ENCODE measurements at regions of chr3 and their contacts with region 1.

Region 1: DNA sequence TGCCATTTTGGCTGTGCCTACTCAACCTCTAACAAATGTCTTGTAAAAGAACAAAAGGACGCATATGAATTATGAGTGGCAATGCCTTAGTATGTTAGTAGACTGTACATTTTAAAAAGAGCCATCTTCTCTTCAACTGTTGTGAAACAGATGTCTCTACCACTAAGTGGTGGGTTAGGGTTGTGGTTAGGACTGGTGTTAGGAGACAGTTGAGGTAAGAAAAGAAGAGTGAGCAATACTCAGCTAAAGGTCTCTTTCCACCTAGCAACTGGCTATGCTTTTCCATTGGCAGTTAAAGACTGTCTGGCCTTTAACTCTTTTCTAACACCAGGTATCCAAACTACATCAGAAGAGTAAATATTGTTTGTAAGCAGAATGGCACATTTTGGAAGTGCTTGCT is 221.7 kb upstream of the TBC1D5 start:
- DNase-seq: no peak
- H3K4me3 Mint-ChIP-seq: no peak overlapping the region
- H3K27ac Mint-ChIP-seq: peak overlapping the region; percentile 54
- H3K4me1 Mint-ChIP-seq: peaks cover 11% of the 10 kb centered on the region
- H3K27me3 Mint-ChIP-seq: peaks cover 2% of the 10 kb centered on the region

Region 2: GRCh38 chr3:17945018-17945798 is 18.9 kb before region 1 on chr3:
- intact Hi-C with region 1: loop called (anchors 2 kb)
- DNase-seq: no peak
- H3K4me3 Mint-ChIP-seq: no peak overlapping the region
- H3K27ac Mint-ChIP-seq: no peak overlapping the region
- H3K4me1 Mint-ChIP-seq: peaks cover 12% of the 10 kb centered on the region
- H3K27me3 Mint-ChIP-seq: peaks cover 11% of the 10 kb centered on the region

Region 3: DNA sequence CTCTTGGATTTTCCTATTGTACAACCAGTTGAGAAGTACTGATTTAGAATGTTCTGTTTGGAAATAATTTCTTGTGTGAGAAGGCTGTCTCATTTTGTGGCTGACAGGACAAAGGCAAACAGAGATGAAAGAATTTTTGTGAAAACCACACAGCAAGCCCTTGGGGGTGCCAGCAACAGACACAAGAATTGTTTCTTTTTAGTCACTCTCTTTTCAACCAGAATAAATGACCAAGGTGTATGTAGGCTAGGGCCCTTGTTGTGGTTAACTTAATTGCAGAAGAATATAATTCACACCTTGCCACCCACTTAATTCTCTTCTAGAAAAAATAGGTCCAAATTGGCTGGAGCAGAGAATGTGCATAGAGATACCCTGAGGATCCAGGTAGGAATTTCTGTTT is 107.7 kb after region 1 on chr3:
- intact Hi-C with region 1: no loop called
- DNase-seq: no peak
- H3K4me3 Mint-ChIP-seq: no peak overlapping the region
- H3K27ac Mint-ChIP-seq: no peak overlapping the region
- H3K4me1 Mint-ChIP-seq: no peaks in the 10 kb centered on the region
- H3K27me3 Mint-ChIP-seq: no peaks in the 10 kb centered on the region